Thyroid gland (tissue), 4 donors: ENCODE measurements at regions of chr3 and their contacts with region 1.

Region 1: DNA sequence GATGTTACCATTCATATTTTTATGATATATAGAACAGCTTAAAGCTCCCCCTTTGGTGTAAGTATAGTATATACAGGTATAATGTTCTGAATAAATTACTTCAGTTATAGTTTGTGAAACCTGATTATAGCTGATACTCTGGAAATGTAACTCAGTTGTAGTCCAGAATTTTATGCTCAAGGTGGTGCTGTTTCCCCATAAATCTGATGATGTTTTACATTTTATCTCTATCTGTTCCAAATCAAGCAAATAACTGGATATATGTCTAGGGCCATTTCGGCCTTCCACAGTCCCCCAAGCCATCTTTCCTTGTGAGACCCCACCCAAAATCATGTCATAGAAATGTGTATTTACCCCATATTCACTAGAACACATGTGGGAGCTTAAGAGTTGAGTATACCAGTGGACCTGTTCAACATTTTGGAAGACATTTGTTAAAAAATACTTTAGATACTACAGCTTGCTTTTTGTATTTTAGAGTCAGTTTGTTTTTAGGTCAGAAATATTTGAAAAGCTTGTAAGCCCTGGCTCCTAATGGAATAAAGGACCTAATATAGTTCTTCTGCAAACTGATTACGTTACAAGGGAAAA is 107.1 kb downstream of the ATG7 start:
- DNase-seq: no peak
- H3K4me3 ChIP-seq: no peak overlapping the region
- H3K27ac ChIP-seq: no peak overlapping the region
- H3K4me1 ChIP-seq: no peaks in the 10 kb centered on the region
- H3K27me3 ChIP-seq: no peaks in the 10 kb centered on the region
- CTCF ChIP-seq: peak; percentile 38 to 89 (median 48)
- POLR2A ChIP-seq: no peak

Region 2: DNA sequence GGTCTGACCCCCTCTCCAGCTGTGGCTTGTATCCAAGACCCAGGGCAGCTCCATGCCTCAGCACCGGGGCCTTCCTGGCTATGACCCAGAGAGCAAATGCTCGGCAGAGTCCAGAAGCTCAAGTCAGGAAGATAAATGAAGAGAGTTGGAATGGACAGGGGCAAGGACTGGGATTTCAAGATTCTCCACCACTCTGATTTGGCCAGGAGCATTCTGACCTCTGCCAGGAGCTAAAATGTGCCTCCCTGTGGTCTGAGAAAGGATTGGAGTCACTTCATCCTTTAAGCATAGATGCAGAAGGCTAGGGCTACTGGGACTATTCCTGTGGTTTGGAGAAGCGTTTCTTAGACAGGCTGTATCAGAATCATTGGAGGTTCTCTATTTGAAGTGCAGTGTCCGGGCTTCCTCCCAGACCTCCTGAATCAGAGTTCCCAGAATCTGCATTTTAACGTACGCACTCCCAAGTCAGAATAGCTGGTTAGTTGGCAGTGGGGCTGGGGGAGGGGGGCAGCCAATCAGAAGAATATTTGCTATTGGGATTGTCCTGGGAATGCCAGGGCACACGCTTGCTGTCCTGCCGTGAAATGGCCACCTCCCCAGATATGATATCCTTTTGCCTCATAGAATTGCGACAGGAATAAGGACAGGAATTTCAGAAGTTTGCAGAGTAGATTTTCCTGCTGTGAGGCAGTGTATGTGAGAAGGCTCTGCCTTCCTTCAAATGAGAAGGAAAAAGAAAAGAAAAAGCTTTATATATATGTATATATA is 167.6 kb before region 1 on chr3:
- intact Hi-C with region 1: no loop called
- DNase-seq: peak; percentile 43 to 67
- H3K4me3 ChIP-seq: no peak overlapping the region
- H3K27ac ChIP-seq: peak overlapping the region in 1 of 3 donors; percentile 53
- H3K4me1 ChIP-seq: peaks cover 7 to 22% of the 10 kb centered on the region in 2 donors
- H3K27me3 ChIP-seq: no peaks in the 10 kb centered on the region
- CTCF ChIP-seq: no peak
- POLR2A ChIP-seq: no peak

Region 3: DNA sequence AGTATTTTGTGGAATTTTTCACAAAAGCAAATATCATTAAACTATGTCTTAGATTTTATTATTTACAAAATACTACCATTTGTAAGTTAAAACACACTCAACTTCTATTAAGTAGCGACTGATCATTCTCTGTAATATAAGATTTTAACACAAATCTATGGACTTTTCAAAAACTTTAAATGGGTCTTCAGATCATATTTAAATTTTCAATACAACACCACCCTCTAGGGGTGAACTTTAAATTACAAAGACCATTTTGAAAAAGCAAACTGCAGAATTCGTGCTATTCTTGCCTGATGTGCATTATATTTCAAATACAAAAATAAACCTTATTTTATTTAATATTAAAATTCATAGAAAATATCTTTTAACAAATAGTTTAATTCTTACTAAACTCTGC is 272.6 kb after region 1 on chr3:
- intact Hi-C with region 1: loop called (anchors 5 kb)
- DNase-seq: no peak
- H3K4me3 ChIP-seq: no peak overlapping the region
- H3K27ac ChIP-seq: no peak overlapping the region
- H3K4me1 ChIP-seq: peaks cover 5% of the 10 kb centered on the region in 2 donors
- H3K27me3 ChIP-seq: no peaks in the 10 kb centered on the region
- CTCF ChIP-seq: peak; percentile 15 to 65 (median 42)
- POLR2A ChIP-seq: no peak

Region 4: DNA sequence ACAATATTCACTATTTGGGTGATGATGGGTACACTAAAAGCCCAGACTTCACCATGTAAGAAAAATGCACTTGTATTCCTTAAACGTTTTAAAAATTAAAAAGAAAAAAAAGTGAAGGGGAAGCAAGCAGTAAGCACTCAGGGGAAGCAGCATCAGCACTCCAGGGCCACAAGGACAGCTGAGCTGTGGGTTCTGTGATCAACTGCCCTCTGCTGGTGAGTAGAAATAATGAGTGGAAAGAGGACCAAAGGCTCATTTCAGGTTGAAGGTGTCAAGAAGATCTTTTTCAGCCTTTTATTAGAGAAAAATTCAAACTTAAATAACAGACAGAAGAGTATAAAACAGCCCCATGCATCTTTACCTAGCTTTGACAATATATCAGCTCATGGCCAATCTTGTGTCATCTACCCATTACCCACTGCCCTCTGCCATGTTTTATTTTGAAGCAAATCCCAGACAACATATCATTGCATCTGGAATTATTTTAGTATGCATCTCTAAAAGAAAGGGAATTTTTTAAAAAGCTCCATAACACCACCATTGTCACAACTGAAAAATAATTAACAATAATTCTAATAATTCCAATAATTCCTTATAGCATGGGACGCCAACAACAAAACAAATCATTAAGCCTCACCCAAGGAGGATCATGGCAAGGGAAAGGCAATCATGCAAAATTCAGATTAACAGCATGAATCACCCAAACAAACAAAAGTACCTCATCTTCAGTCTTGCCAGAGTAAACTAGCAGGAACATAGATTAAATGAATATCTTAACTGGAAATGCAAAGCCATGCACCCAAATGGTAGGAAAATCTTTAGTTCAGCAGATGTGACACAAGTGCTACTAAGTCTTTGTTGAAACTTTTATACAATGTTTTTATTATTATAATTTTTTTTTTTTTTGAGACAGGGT is 424.9 kb after region 1 on chr3:
- intact Hi-C with region 1: loop called (anchors 5 kb)
- DNase-seq: peak; percentile 50 to 54
- H3K4me3 ChIP-seq: no peak overlapping the region
- H3K27ac ChIP-seq: no peak overlapping the region
- H3K4me1 ChIP-seq: no peaks in the 10 kb centered on the region
- H3K27me3 ChIP-seq: no peaks in the 10 kb centered on the region
- CTCF ChIP-seq: peak in 5 of 6 experiments; percentile 44 to 85 (median 70)
- POLR2A ChIP-seq: no peak